ENCODE measurements at regions of chr22 and their contacts with region 1.

Region 1: DNA sequence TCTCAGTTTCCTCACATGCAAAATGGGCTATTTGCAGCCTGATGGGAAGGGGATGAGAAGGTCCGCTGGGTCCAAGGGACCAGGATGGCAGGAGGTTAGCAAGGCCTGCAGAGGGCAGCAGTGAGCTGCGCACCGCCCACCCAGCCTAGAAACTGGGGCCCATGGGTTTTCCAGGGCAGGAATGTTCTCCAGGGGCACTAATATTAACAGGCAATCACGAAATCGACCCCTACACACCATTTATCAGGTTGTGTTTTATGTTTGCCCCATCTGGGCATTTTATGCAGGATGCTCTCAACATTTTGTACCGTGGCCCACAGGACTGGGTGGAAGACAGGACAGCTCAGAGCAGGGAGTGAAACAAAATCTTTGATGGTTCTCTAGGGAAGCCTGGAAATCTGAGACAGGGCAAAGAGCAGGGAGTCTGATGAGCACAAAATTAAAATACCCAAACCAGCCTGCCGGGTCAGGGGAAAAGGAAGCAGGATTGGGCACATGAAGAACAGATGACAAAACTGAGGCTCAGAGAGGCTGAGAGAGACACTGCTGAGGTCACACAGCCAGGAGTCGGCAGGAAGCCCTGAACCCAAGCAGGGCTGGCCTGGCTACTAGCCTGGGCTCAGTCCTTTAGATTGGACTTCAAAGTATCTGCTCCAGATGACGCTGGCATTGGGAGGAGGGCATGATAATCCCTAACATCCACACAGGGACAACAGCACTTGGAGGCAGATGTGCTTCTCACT is 1.6 kb upstream of the BCR start:
- DNase-seq: peak; percentile 70
- ATAC-seq: peak; percentile 62 to 65

Region 2: DNA sequence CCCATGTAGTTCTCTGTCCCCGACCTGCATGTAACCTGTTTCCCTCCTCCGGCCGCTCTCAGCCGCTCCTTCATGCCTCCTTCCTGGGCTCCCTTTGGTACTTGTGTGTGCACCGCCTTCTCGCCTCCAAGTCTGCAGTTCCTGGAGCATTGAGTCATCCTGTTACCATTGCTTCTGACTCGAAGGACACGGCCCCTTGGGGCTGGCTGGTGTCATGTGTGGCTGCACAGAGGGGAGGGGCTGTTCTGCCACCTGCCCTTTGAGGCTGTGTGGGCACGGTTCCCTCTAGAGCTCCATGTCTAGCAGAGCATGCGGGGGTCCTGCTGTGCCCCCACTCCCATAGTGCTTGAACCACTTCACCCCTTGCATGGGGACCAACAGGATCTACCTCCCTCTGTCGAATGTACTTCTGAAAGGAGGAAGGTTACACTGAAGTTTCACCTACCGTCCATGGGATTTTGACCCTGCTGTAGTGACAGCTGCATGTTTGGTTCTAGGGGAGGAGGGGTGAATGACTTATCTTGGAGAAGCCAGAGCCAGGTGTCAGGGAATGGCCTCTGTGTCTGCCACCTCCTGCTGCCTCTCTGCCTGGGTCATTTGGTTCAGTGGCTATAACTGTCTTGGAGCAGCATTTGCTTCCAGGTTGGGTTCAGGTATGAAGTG is 41.3 kb after region 1 on chr22:
- intact Hi-C with region 1: loop called in 1 of 2 experiments (anchors 5 kb)
- DNase-seq: no peak
- ATAC-seq: no peak

Region 3: DNA sequence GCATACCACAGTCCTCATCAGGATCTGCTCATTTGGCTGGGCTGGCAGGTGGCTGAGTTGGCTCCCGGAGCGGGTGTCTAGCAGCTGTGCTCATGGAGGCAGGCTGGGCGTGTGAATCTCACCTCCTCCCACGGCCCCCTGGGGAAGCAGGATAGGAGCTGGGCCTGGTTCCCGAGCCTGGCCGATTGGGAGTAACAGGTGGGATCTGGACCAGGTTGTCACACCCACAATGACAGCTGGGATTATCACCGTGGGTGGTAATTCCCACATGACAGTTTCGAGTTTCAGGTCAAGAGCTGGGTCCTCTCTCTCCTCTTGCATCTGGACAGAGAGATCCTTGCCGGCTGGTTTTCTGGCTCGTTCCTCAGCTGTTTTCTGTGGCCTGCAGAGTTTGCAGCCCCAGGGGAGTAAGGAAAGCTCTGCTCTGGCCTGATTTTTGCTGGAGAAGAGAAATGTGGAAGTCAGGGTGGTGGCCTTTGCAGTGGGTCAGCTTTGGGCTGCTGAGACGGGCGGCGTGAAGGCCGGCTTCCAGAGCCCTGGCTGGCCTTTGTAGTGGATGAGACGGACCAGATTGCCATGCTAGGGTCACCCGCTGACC is 58.6 kb after region 1 on chr22:
- intact Hi-C with region 1: loop called in 1 of 2 experiments (anchors 10 kb)
- DNase-seq: peak; percentile 79
- ATAC-seq: peak; percentile 76 to 84

Region 4: DNA sequence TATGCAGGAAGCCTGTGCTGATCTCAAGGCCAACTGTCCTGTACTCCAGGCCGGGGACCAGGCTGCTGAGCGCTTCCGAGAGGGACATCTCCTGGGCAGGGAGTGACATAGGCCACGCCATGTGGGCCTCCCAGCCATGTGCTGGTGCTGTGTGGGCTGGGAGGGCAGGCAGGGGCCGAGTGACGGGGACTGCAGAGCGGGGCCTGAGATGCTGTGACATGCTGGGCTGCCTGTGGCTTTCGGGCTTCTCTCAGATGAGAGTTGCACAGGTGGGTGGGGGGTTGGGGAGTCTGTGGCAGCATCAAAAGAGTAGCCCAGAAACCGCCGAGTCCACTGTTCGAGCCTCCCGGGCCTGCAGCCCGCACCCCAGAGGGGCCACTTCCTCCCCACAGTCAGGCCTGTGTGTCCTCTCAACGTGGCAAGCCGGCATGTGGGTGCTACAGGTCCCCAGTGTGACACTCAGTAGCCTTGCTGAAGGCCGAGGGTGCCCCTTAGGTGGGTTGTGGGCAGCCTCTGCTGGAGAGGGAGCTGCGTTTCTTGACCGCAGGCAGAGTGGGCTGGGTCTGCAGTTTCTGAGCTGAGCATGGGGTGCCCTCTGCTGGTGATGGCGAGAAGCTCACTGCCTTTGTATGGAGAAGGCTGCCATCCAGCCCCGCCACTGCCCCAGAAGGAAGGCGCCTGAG is 102.9 kb after region 1 on chr22:
- intact Hi-C with region 1: loop called (anchors 1 to 2 kb)
- DNase-seq: peak; percentile 87
- ATAC-seq: peak; percentile 77 to 83

Region 5: DNA sequence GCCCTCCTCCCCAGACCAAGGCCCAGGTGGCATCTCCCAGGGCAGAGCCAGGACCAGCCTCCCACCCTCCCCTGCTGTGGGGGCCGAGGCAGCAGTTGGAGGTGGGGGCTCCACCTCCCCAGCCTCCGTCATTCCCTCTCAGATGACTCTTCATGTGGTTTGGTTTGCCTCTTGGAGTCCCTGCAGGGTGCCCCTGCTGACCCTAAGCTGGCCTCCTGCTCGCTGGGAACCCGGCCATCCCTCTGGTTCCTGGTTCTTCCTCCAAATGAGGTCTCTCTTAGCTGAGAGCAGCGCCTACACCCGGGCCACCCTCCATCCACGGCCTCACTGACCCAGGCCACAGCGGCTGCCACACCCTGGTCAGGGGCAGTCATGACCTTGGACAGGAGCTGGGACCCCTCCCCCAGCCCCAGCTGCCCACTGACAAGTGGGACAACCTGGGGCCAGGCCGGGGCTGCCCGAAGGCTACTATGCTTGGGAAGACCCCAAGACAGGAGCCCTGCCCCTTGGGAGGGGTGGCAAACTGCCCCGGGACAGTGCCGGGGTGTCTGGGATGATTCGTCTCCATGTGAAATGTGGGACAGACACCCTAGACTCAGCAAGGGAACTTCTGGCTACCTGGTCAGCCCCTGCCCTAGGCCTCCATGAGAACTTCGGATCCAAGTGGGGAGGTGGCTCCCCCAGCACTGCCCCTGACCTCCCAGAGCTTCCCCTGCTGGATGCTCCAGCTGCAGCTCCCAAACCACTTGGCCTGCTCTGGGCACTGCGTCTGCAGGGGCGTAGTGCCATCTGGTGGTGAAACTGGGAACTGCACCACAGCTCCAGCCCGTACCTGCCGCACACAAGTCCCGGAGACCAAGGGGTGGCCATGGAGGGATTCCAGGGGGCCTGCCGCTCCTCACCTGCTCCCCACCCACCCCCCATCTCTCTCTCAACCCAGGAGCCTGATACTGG is 206.9 kb after region 1 on chr22:
- intact Hi-C with region 1: loop called (anchors 10 kb)
- DNase-seq: peak; percentile 83
- ATAC-seq: peak; percentile 66 to 79